Activated B cell treated with CpG ODN at 0.5 μM for 24 hours (primary cell): ENCODE measurements at regions of chr6 and their contacts with region 1.

Region 1: GRCh38 chr6:34526992-34527728 is 29.0 kb downstream of the SPDEF start:
- DNase-seq: peak; percentile 92
- ATAC-seq: peak; percentile 98
- H3K4me3 Mint-ChIP-seq: peak overlapping the region; percentile 69
- H3K27ac Mint-ChIP-seq: peak overlapping the region; percentile 66
- H3K4me1 Mint-ChIP-seq: peaks cover 7% of the 10 kb centered on the region
- H3K27me3 Mint-ChIP-seq: no peaks in the 10 kb centered on the region
- CTCF ChIP-seq: no peak

Region 2: DNA sequence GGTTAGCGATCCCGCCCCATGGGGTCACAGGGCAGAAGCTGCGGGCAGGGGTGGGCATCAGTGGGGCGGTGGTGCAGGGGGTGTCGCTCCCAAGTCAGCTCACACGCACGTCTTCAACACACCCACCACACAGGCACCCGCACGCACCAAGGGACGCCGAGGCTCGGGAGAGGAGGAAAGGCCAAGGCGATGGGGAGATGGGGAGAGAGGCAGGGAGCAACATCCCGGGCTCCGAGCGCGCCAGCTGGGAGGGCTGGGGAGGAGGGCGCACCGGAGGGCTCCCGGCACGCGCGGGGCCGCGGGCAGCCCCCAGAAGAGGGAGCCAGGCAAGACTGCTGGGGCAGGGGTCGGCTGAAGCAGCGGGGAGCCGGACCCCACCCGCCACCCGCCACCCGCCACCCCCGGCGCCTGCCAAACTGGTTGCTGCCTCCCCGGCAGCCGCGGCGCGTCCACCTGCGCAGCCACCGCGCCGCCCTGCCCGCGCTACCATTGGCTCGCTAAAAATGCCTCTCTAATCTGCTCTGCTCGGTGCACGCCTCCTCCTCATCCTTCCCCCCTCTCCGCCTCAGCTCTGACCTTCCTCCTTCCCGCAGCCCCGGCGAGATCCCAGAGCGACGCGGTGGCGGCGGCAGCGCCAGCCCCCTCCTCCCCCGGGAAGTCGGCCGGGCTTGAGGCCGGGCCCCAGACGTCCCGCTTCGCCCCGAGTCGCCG is 61.5 kb before region 1 on chr6 and contains the start of gene PACSIN1:
- CTCF ChIA-PET with region 1: interaction called, 5 read pairs
- POLR2A ChIA-PET with region 1: interaction called, 3 read pairs
- intact Hi-C with region 1: loop called (anchors 5 kb)
- DNase-seq: no peak
- ATAC-seq: peak; percentile 52
- H3K4me3 Mint-ChIP-seq: peak within 1 kb of the TSS; percentile 76
- H3K27ac Mint-ChIP-seq: no peak within 1 kb of the TSS
- H3K4me1 Mint-ChIP-seq: peaks cover 29% of the 10 kb centered on the region
- H3K27me3 Mint-ChIP-seq: peaks cover 17% of the 10 kb centered on the region
- CTCF ChIP-seq: no peak
- total RNA-seq, gene PACSIN1: 0.11 and 0.20 TPM in 2 replicates

Region 3: DNA sequence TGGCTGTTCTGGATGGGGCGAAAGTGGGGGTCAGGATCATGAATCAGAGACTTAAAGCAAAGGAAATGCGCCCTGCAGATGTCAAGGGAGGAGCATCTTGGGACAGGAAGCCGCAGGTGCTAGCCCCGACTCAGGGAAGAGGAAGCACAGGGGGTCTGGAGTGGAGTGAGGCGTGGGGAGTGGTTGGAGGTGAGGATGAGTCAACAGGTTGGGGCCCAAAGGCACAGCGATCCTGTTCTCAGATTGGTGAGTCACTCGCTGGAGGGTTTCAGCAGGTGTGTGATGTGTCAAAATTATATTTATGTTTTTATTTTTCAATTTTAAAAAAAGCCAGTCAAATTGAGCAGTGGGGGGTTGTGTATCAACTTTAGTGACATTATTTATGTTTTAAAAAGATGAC is 42.3 kb before region 1 on chr6:
- CTCF ChIA-PET with region 1: no interaction called
- POLR2A ChIA-PET with region 1: no interaction called
- intact Hi-C with region 1: no loop called
- DNase-seq: no peak
- ATAC-seq: peak; percentile 95
- H3K4me3 Mint-ChIP-seq: no peak overlapping the region
- H3K27ac Mint-ChIP-seq: no peak overlapping the region
- H3K4me1 Mint-ChIP-seq: peaks cover 13% of the 10 kb centered on the region
- H3K27me3 Mint-ChIP-seq: no peaks in the 10 kb centered on the region
- CTCF ChIP-seq: no peak